ENCODE measurements at regions of chr5 and their contacts with region 1.

Region 1: GRCh38 chr5:9207817-9208418 is 338.0 kb downstream of the SEMA5A start:
- DNase-seq: peak; percentile 69
- ATAC-seq: peak; percentile 86
- H3K4me3 ChIP-seq: no peak overlapping the region
- H3K27ac ChIP-seq: no peak overlapping the region
- H3K4me1 ChIP-seq: peaks cover 4% of the 10 kb centered on the region; the same call in 1 of the 2 replicates
- H3K27me3 ChIP-seq: no peaks in the 10 kb centered on the region
- CTCF ChIP-seq: peak; percentile 69
- POLR2A ChIP-seq: no peak; the same call in 1 of the 2 replicates
- RAD21 ChIP-seq: peak; percentile 87

Region 2: GRCh38 chr5:7927466-7928375 is 1280.2 kb before region 1 on chr5:
- CTCF ChIA-PET with region 1: interaction called, 4 read pairs
- POLR2A ChIA-PET with region 1: no interaction called
- dilution Hi-C with region 1: no loop called
- in situ Hi-C with region 1: loop called (anchors 10 kb)
- intact Hi-C with region 1: loop called (anchors 2 kb)
- DNase-seq: peak; percentile 64
- ATAC-seq: peak; percentile 71
- H3K4me3 ChIP-seq: no peak overlapping the region
- H3K27ac ChIP-seq: no peak overlapping the region
- H3K4me1 ChIP-seq: peaks cover 2% of the 10 kb centered on the region
- H3K27me3 ChIP-seq: no peaks in the 10 kb centered on the region
- CTCF ChIP-seq: peak; percentile 74
- POLR2A ChIP-seq: 0 out of 2 replicates have a peak, but pooled peaks have one; percentile 41
- RAD21 ChIP-seq: peak; percentile 86

Region 3: GRCh38 chr5:8457187-8458037 is 750.5 kb before region 1 on chr5:
- CTCF ChIA-PET with region 1: no interaction called
- POLR2A ChIA-PET with region 1: no interaction called
- dilution Hi-C with region 1: no loop called
- in situ Hi-C with region 1: no loop called
- intact Hi-C with region 1: loop called (anchors 10 kb)
- DNase-seq: peak; percentile 98
- ATAC-seq: peak; percentile 98
- H3K4me3 ChIP-seq: peak overlapping the region; percentile 82
- H3K27ac ChIP-seq: peak overlapping the region; percentile 71
- H3K4me1 ChIP-seq: 0 out of 2 replicates have a peak, but pooled peaks cover 2% of the 10 kb centered on the region
- H3K27me3 ChIP-seq: no peaks in the 10 kb centered on the region
- CTCF ChIP-seq: no peak
- POLR2A ChIP-seq: peak; percentile 76
- RAD21 ChIP-seq: no peak

Region 4: GRCh38 chr5:9156282-9156681 is 51.6 kb before region 1 on chr5:
- CTCF ChIA-PET with region 1: no interaction called
- POLR2A ChIA-PET with region 1: no interaction called
- dilution Hi-C with region 1: no loop called
- in situ Hi-C with region 1: no loop called
- intact Hi-C with region 1: loop called (anchors 2 kb)
- DNase-seq: peak; percentile 83
- ATAC-seq: peak; percentile 86
- H3K4me3 ChIP-seq: no peak overlapping the region
- H3K27ac ChIP-seq: peak overlapping the region; percentile 1; the same call in 1 of the 2 replicates
- H3K4me1 ChIP-seq: peaks cover 10% of the 10 kb centered on the region
- H3K27me3 ChIP-seq: no peaks in the 10 kb centered on the region
- CTCF ChIP-seq: peak; percentile 73
- POLR2A ChIP-seq: no peak
- RAD21 ChIP-seq: peak; percentile 86

Measured in IMR-90 (cell line).